Calu3 (cell line): ENCODE measurements at regions of chr3 and their contacts with region 1.

Region 1: DNA sequence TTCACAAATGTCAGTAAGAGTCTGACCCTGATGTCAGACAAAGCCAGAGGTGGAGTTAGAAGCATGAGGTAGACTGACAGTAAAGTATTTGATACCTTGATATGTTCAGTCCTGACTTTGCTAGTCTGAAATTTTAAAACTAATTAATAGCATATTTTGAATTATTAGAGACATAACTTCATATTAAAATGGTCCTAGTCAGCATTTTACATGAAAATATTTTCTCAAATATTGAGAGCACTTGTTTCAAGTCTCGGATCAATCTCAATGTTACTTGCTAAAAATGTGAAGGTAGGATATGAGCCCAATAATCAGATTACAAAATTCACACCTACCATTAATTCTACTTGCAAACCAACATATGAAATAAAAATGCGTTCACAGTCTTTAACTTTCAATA is 58.1 kb upstream of the TTC14 start:
- DNase-seq: no peak
- H3K4me3 Mint-ChIP-seq: no peak overlapping the region
- H3K27ac Mint-ChIP-seq: no peak overlapping the region
- H3K4me1 Mint-ChIP-seq: no peaks in the 10 kb centered on the region
- H3K27me3 Mint-ChIP-seq: no peaks in the 10 kb centered on the region
- CTCF ChIP-seq: no peak

Region 2: GRCh38 chr3:179355996-179356395 is 1187.9 kb before region 1 on chr3:
- CTCF ChIA-PET with region 1: no interaction called
- intact Hi-C with region 1: loop called (anchors 5 kb)
- DNase-seq: no peak
- H3K4me3 Mint-ChIP-seq: no peak overlapping the region
- H3K27ac Mint-ChIP-seq: no peak overlapping the region
- H3K4me1 Mint-ChIP-seq: no peaks in the 10 kb centered on the region
- H3K27me3 Mint-ChIP-seq: no peaks in the 10 kb centered on the region
- CTCF ChIP-seq: no peak